Adrenal gland (tissue), 19 donors: ENCODE measurements at regions of chr1 and their contacts with region 1.

Region 1: DNA sequence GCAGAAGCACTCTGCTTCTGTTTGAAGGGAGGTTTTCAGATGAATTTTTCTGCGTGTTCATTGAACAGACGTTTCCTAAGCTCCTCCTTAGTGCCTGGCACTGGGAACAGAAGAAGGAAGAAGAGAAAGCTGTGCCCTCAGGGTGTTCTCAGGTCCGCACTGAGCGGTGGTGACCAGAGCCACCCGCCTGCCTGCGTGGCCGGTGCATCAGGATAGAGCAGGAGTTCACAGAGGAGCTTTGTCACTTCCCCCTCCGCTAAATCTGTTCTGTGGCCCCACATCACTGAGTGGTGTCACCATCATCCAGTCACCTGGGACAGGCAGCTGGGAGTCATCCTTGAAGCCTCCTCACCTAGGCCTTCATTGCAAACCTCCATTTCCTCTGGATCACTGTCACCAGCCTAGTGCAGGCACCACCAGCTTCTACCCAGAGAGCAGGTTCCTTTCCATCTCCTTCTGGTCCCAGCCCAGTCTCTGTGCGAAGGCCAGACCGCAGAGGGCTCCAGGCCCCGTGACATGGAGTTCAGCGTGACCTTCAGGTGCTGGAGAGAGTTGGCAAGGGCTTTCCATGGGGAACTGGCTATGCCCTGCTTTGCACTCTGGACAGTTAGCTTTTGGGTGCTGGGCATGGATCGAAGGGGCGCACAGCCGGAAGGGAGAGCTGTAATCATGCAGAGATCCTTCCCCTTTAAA is 21.7 kb downstream of the PARK7 start:
- DNase-seq: peak in 6 of 7 donors; percentile 42 to 71 (median 58)
- H3K4me3 ChIP-seq: no peak overlapping the region
- H3K27ac ChIP-seq: peak overlapping the region in 3 of 5 donors; percentile 2 to 26 (median 20)
- H3K4me1 ChIP-seq: peaks cover 8 to 14% of the 10 kb centered on the region in 2 donors
- H3K27me3 ChIP-seq: no peaks in the 10 kb centered on the region
- CTCF ChIP-seq: no peak
- POLR2A ChIP-seq: no peak

Region 2: DNA sequence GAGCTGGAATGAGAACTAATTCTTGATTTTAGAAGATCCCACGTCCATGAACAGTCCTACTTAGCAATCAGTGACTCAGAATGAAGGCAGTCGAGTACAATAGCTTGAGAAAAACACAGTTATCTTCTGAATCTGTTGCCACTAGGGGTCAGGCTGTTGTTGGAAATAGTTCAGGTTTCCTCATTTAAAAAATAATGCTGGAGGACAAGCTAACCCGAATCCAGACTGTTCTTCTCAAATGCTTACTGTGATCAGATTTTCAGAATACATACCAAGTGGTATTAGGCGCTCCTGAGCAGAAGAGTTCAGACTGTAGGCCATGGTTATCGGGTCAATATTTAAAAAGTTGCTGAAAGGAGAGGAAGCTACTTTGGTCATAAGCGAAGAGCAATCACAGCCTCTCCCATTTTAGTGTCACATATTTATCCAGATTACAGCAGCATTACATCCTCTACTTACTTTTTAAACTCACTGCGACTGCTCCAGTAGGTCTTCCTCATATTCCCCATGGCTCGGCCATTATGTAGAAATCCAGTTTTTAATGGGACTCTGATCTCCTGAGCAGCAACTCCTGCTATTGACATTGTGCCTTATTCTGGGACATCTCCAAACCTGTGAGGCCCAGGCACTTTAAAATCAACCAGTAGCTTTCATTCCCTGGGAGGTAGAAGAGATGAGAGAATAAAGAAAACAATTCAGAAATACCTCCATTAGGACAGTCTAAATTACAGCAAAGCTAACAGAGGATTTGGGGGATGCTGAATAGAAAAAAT is 32.0 kb after region 1 on chr1:
- intact Hi-C with region 1: loop called in 1 of 2 experiments (anchors 5 kb)
- DNase-seq: peak in 6 of 7 donors; percentile 55 to 77 (median 68)
- H3K4me3 ChIP-seq: no peak overlapping the region
- H3K27ac ChIP-seq: peak overlapping the region in 4 of 5 donors; percentile 57 to 84 (median 70)
- H3K4me1 ChIP-seq: peaks cover 33 to 50% of the 10 kb centered on the region in 2 donors
- H3K27me3 ChIP-seq: no peaks in the 10 kb centered on the region
- CTCF ChIP-seq: peak; percentile 61 to 89 (median 83)
- POLR2A ChIP-seq: peak in 1 of 2 donors; percentile 22

Region 3: GRCh38 chr1:8303141-8303540 is 319.9 kb after region 1 on chr1:
- intact Hi-C with region 1: no loop called
- DNase-seq: no peak
- H3K4me3 ChIP-seq: no peak overlapping the region
- H3K27ac ChIP-seq: no peak overlapping the region
- H3K4me1 ChIP-seq: no peaks in the 10 kb centered on the region
- H3K27me3 ChIP-seq: no peaks in the 10 kb centered on the region
- CTCF ChIP-seq: no peak
- POLR2A ChIP-seq: no peak

Region 4: GRCh38 chr1:8314346-8315280 is 331.4 kb after region 1 on chr1:
- intact Hi-C with region 1: loop called (anchors 5 kb)
- DNase-seq: peak; percentile 80 to 92 (median 84)
- H3K4me3 ChIP-seq: no peak overlapping the region
- H3K27ac ChIP-seq: no peak overlapping the region
- H3K4me1 ChIP-seq: peaks cover 3 to 15% of the 10 kb centered on the region in 2 donors
- H3K27me3 ChIP-seq: no peaks in the 10 kb centered on the region
- CTCF ChIP-seq: peak; percentile 72 to 97 (median 92)
- POLR2A ChIP-seq: no peak